ENCODE measurements at regions of chr9 and their contacts with region 1.

Region 1: GRCh38 chr9:122219856-122220672 is 8.7 kb downstream of the LHX6 start:
- DNase-seq: no peak
- ATAC-seq: peak; percentile 17 to 65 (median 44)
- H3K4me3 ChIP-seq: peak overlapping the region; percentile 51
- H3K27ac ChIP-seq: no peak overlapping the region
- H3K4me1 ChIP-seq: peaks cover 14% of the 10 kb centered on the region
- H3K27me3 ChIP-seq: peaks cover 0 to 91% (median 29%) of the 10 kb centered on the region in 3 donors
- CTCF ChIP-seq: no peak

Region 2: GRCh38 chr9:122164286-122164685 is 55.8 kb before region 1 on chr9:
- intact Hi-C with region 1: loop called in 1 of 2 experiments (anchors 5 kb)
- DNase-seq: no peak
- ATAC-seq: no peak
- H3K4me3 ChIP-seq: no peak overlapping the region
- H3K27ac ChIP-seq: no peak overlapping the region
- H3K4me1 ChIP-seq: no peaks in the 10 kb centered on the region
- H3K27me3 ChIP-seq: peaks cover 0 to 4% (median 0%) of the 10 kb centered on the region in 3 donors
- CTCF ChIP-seq: no peak

Measured in psoas muscle (tissue), 8 donors.